Right ventricle myocardium inferior (tissue), 1 donor: ENCODE measurements at regions of chr5 and their contacts with region 1.

Region 1: GRCh38 chr5:1103505-1104326 is 8.1 kb downstream of the SLC12A7 start:
- DNase-seq: peak; percentile 91
- ATAC-seq: peak; percentile 67

Region 2: GRCh38 chr5:1125030-1125357 is 21.3 kb after region 1 on chr5:
- intact Hi-C with region 1: loop called (anchors 2 kb)
- DNase-seq: peak; percentile 89
- ATAC-seq: peak; percentile 88